IMR-90 (cell line): ENCODE measurements at regions of chr19 and their contacts with region 1.

Region 1: DNA sequence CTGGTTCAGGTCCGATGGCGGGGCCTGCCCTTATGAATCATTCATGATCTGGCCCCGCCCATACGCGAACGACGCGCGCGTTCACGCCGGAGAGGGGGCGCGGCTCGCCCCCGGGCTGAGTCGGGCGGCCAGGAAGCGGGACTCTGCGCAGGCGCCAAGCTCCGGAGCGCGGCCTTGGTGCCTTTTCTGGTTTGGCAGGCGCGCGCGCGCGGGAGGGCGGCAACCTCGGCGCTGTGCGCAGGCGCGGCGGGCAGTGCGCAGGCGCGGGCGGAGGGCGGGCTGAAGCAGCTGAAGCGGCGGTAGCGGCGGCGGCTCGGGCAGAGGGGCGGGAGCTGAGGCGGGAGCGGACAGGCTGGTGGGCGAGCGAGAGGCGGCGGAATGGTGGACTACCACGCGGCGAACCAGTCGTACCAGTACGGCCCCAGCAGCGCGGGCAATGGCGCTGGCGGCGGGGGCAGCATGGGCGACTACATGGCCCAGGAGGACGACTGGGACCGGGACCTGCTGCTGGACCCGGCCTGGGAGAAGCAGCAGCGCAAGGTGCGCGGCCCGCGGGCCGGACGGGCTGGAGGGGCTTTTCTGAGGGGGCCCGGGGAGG is at the start of gene ACTN4:
- DNase-seq: peak; percentile 94
- ATAC-seq: peak; percentile 87
- H3K4me3 ChIP-seq: peak within 1 kb of the TSS; percentile 80
- H3K27ac ChIP-seq: peak within 1 kb of the TSS; percentile 91
- H3K4me1 ChIP-seq: peaks cover 21% of the 10 kb centered on the region
- H3K27me3 ChIP-seq: no peaks in the 10 kb centered on the region
- CTCF ChIP-seq: no peak
- POLR2A ChIP-seq: peak; percentile 98
- RAD21 ChIP-seq: peak; percentile 16; the same call in 1 of the 2 replicates
- total RNA-seq, gene ACTN4: 614 and 659 TPM in 2 replicates

Region 2: GRCh38 chr19:38685666-38686529 is 38.4 kb after region 1 on chr19:
- CTCF ChIA-PET with region 1: no interaction called
- POLR2A ChIA-PET with region 1: no interaction called
- dilution Hi-C with region 1: no loop called
- in situ Hi-C with region 1: no loop called
- intact Hi-C with region 1: loop called (anchors 5 kb)
- DNase-seq: peak; percentile 73
- ATAC-seq: peak; percentile 13
- H3K4me3 ChIP-seq: no peak overlapping the region
- H3K27ac ChIP-seq: peak overlapping the region; percentile 73
- H3K4me1 ChIP-seq: peaks cover 41% of the 10 kb centered on the region
- H3K27me3 ChIP-seq: no peaks in the 10 kb centered on the region
- CTCF ChIP-seq: peak; percentile 67
- POLR2A ChIP-seq: no peak
- RAD21 ChIP-seq: peak; percentile 48

Region 3: GRCh38 chr19:38711726-38712153 is 64.3 kb after region 1 on chr19:
- CTCF ChIA-PET with region 1: interaction called, 3 read pairs
- POLR2A ChIA-PET with region 1: interaction called, 3 read pairs
- dilution Hi-C with region 1: no loop called
- in situ Hi-C with region 1: no loop called
- intact Hi-C with region 1: loop called (anchors 2 kb)
- DNase-seq: peak; percentile 97
- ATAC-seq: peak; percentile 94
- H3K4me3 ChIP-seq: no peak overlapping the region
- H3K27ac ChIP-seq: peak overlapping the region; percentile 63
- H3K4me1 ChIP-seq: peaks cover 45% of the 10 kb centered on the region
- H3K27me3 ChIP-seq: no peaks in the 10 kb centered on the region
- CTCF ChIP-seq: peak; percentile 39
- POLR2A ChIP-seq: no peak
- RAD21 ChIP-seq: peak; percentile 67